Activated CD4-positive, alpha-beta memory T cell treated with anti-CD3 and anti-CD28 coated beads for 36 hours (primary cell): ENCODE measurements at regions of chr15 and their contacts with region 1.

Region 1: DNA sequence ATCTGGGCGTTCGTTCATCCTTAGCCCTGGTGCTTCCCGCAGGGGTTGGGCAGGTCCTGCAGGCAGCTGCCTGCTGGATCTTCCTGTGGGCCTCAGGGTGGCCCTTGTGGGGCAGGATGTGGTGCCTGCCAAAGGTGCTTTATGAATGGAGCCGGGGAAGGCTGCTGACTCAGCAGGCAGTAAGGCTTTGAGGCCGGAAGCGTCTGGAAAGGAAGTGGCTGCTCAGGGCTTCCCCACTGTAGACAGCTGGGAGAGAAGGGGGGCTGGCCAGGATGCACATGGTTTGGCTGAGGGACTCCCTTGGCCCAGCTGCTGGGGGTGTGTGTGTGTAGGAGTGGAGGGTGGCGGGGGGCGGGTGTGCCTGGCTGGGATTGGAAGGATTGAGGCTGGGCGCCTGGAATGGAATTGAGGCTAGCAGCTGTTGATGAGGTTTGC is 12.9 kb downstream of the CD276 start:
- DNase-seq: peak; percentile 92
- H3K4me3 Mint-ChIP-seq: peak overlapping the region; percentile 30
- H3K27ac Mint-ChIP-seq: peak overlapping the region; percentile 36
- H3K4me1 Mint-ChIP-seq: peaks cover 31% of the 10 kb centered on the region
- H3K27me3 Mint-ChIP-seq: peaks cover 53% of the 10 kb centered on the region

Region 2: DNA sequence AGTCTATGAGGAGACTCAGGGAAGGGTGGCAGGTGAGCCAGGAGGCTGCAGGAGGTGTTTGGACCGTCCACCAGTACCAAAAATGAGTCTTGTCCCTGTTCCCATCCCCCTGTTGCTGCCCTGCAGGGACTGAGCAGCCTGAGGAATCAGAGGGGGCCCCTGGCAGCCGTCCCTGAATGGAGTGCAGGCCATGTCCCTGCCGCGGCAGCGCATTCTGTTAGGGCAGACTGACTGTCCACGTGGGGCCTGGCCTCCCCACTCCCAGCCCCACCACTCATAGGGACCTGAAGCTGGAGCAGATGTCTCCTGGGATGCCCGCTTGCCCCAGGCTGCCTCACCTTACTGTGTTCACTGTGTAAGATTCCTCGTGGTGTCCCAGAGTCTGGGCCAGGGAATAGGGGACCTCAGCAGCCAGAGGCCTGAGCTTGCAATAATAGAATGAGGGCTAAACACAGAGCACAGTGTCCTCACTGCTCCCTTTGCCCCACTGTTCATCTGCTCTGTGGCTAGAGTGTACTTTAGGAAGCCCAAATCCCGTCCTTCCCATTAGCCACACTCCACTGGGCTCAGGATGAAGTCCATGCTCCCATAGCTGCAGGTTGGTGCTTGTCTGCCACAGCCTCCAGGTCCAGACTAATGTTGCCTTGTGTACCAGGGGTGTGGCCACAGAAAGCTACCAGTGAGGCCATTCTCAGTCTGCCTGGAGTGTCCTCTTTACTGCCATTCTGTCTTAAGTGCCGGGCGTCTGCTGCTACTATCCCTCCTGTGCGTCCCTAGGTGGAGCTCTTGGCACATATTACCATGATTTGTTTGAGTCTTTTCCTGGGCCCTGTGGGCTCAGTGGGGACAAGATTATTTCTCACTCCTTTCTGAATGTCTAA is 391.5 kb before region 1 on chr15:
- CTCF ChIA-PET with region 1: interaction called, 7 read pairs
- POLR2A ChIA-PET with region 1: no interaction called
- intact Hi-C with region 1: loop called (anchors 5 kb)
- DNase-seq: peak; percentile 37
- H3K4me3 Mint-ChIP-seq: no peak overlapping the region
- H3K27ac Mint-ChIP-seq: no peak overlapping the region
- H3K4me1 Mint-ChIP-seq: peaks cover 4% of the 10 kb centered on the region
- H3K27me3 Mint-ChIP-seq: no peaks in the 10 kb centered on the region

Region 3: GRCh38 chr15:73560501-73561117 is 136.4 kb before region 1 on chr15:
- CTCF ChIA-PET with region 1: interaction called, 40 read pairs
- POLR2A ChIA-PET with region 1: no interaction called
- intact Hi-C with region 1: loop called (anchors 1 kb)
- DNase-seq: no peak
- H3K4me3 Mint-ChIP-seq: no peak overlapping the region
- H3K27ac Mint-ChIP-seq: no peak overlapping the region
- H3K4me1 Mint-ChIP-seq: no peaks in the 10 kb centered on the region
- H3K27me3 Mint-ChIP-seq: no peaks in the 10 kb centered on the region

Region 4: GRCh38 chr15:73593304-73594074 is 103.6 kb before region 1 on chr15:
- CTCF ChIA-PET with region 1: no interaction called
- POLR2A ChIA-PET with region 1: no interaction called
- intact Hi-C with region 1: no loop called
- DNase-seq: no peak
- H3K4me3 Mint-ChIP-seq: no peak overlapping the region
- H3K27ac Mint-ChIP-seq: no peak overlapping the region
- H3K4me1 Mint-ChIP-seq: peaks cover 24% of the 10 kb centered on the region
- H3K27me3 Mint-ChIP-seq: no peaks in the 10 kb centered on the region

Region 5: DNA sequence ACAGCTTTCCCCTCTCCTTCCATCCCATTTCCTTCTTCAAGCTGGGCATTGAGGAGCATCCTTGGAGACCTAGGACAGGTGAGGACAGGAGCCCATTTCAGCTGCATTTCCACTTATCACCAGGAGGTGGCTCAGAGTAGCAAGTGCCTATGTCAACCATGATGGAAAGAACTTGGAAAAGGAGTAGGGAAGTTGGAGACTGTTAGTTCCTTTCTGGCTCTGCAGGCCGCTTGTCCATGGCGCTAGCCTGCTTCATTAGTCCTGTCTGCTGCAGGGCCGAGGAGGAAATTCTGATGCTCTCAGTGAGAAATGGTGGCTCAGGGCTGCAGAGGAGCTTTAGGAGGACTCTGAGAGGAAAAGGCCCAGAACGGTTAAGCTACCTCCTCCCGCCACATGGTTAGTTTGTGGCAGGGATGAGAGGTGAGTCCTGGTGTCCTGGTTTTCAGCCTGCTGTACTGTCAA is 19.9 kb before region 1 on chr15:
- CTCF ChIA-PET with region 1: interaction called, 432 read pairs
- POLR2A ChIA-PET with region 1: interaction called, 3 read pairs
- intact Hi-C with region 1: loop called (anchors 1 kb)
- DNase-seq: peak; percentile 60
- H3K4me3 Mint-ChIP-seq: no peak overlapping the region
- H3K27ac Mint-ChIP-seq: no peak overlapping the region
- H3K4me1 Mint-ChIP-seq: peaks cover 16% of the 10 kb centered on the region
- H3K27me3 Mint-ChIP-seq: peaks cover 25% of the 10 kb centered on the region

Region 6: DNA sequence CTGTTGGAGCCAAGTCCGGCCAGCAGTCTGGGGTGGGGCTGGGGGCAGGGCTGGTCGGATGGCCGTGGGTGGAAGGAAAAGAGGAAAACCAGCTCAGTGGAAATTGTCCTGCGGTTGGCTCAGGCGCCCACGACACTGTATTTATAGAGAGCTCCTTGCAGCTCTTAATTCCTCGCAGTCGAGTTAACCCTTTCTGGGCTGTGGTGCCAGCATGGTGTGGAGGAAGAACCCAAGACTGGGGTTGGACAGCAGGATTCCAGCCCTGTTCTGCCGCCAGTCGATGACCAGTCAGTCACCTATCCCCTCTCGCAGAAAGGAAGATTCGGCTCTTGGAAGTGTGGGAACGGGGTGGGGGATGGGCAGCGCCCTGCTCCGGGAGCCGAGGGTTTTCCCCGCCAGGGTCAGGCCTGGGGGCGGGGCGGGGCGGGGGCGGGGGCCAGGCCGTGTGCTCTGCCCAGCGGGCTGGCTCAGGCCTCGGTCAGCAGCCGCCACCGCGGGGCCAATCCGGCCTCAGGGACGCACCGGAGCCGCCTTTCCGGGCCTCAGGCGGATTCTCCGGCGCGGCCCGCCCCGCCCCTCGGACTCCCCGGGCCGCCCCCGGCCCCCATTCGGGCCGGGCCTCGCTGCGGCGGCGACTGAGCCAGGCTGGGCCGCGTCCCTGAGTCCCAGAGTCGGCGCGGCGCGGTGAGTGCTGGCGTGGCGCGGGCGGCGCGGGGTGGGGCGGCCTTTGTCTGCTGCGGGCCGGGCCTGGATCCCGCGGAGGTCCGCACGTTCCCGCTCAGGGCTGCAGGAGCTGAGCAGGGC is 13.1 kb before region 1 on chr15 and contains the start of gene CD276:
- CTCF ChIA-PET with region 1: interaction called, 432 read pairs
- POLR2A ChIA-PET with region 1: interaction called, 4 read pairs
- intact Hi-C with region 1: loop called (anchors 1 kb)
- DNase-seq: peak; percentile 38
- H3K4me3 Mint-ChIP-seq: peak within 1 kb of the TSS; percentile 70
- H3K27ac Mint-ChIP-seq: no peak within 1 kb of the TSS
- H3K4me1 Mint-ChIP-seq: peaks cover 36% of the 10 kb centered on the region
- H3K27me3 Mint-ChIP-seq: peaks cover 46% of the 10 kb centered on the region
- total RNA-seq, gene CD276: 3.7 to 4.9 TPM

Region 7: GRCh38 chr15:73781038-73781925 is 84.2 kb after region 1 on chr15:
- CTCF ChIA-PET with region 1: no interaction called
- POLR2A ChIA-PET with region 1: no interaction called
- intact Hi-C with region 1: no loop called
- DNase-seq: peak; percentile 20
- H3K4me3 Mint-ChIP-seq: no peak overlapping the region
- H3K27ac Mint-ChIP-seq: no peak overlapping the region
- H3K4me1 Mint-ChIP-seq: no peaks in the 10 kb centered on the region
- H3K27me3 Mint-ChIP-seq: no peaks in the 10 kb centered on the region